Gastrocnemius medialis (tissue), 4 donors: ENCODE measurements at regions of chr6 and their contacts with region 1.

Region 1: DNA sequence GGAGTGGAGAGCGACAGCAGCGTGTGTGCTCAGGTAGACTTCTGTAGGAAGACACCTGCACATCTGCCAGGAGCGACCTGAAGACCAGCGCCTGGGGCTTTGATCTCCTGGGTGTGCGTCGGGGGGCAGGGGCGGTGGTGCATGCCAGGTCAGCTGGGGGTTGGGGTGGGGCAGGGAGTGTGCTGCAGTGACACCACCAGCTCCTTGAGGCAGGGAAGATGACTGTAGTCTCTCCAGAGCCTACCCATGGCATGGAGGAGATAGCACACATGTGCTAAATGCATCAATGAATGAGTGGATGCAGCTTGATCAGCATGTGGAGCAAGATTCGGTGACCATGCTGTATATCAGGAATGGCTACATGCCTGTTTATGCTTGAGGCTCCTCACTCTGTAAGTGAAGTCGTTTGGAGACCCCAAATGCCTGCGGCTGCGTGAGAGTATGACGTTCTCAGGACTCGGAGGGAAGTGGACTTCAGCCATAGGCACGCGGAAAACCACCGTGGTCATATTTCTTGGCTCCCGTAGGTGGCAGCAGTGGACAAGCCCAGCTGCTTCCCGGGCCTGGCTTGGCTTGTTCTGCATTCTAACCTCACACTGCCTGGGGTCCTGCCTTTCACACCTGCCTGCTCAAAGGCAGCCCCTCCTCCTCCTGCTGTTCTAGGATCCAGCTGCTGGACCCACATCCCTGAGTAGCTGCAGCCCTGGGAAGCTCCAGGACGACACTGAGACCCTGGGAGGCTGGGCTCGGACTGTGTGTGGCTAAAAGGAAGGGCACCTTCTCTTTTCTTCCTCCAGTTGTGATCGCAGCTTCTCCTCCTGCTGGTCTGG is 39.4 kb upstream of the KCNK16 start:
- DNase-seq: peak in 1 of 2 donors; percentile 44
- ATAC-seq: peak; percentile 65 to 89
- H3K4me3 ChIP-seq: no peak overlapping the region
- H3K27ac ChIP-seq: no peak overlapping the region
- H3K4me1 ChIP-seq: no peaks in the 10 kb centered on the region
- H3K27me3 ChIP-seq: no peaks in the 10 kb centered on the region
- CTCF ChIP-seq: peak; percentile 39 to 77 (median 67)
- POLR2A ChIP-seq: no peak

Region 2: GRCh38 chr6:39892490-39893129 is 530.7 kb after region 1 on chr6:
- in situ Hi-C with region 1: loop called (anchors 25 kb)
- intact Hi-C with region 1: no loop called
- DNase-seq: peak in 1 of 2 donors; percentile 47
- ATAC-seq: peak in 1 of 2 donors; percentile 61
- H3K4me3 ChIP-seq: no peak overlapping the region
- H3K27ac ChIP-seq: peak overlapping the region in 1 of 4 donors; percentile 3
- H3K4me1 ChIP-seq: peaks cover 10 to 11% of the 10 kb centered on the region in 2 donors
- H3K27me3 ChIP-seq: no peaks in the 10 kb centered on the region
- CTCF ChIP-seq: peak; percentile 39 to 68 (median 64)
- POLR2A ChIP-seq: no peak

Region 3: GRCh38 chr6:40308533-40309306 is 946.8 kb after region 1 on chr6:
- in situ Hi-C with region 1: loop called in 3 of 4 experiments (anchors 25 kb)
- intact Hi-C with region 1: loop called (anchors 10 kb)
- DNase-seq: peak in 1 of 2 donors; percentile 35
- ATAC-seq: peak in 1 of 2 donors; percentile 58
- H3K4me3 ChIP-seq: no peak overlapping the region
- H3K27ac ChIP-seq: no peak overlapping the region
- H3K4me1 ChIP-seq: peaks cover 0 to 7% of the 10 kb centered on the region in 2 donors
- H3K27me3 ChIP-seq: no peaks in the 10 kb centered on the region
- CTCF ChIP-seq: peak; percentile 83 to 86 (median 84)
- POLR2A ChIP-seq: no peak

Region 4: GRCh38 chr6:40845553-40845952 is 1483.7 kb after region 1 on chr6:
- in situ Hi-C with region 1: loop called in 1 of 4 experiments (anchors 25 kb)
- intact Hi-C with region 1: no loop called
- DNase-seq: no peak
- ATAC-seq: peak in 1 of 2 donors; percentile 37
- H3K4me3 ChIP-seq: no peak overlapping the region
- H3K27ac ChIP-seq: no peak overlapping the region
- H3K4me1 ChIP-seq: peaks cover 0 to 13% of the 10 kb centered on the region in 2 donors
- H3K27me3 ChIP-seq: no peaks in the 10 kb centered on the region
- CTCF ChIP-seq: peak in 3 of 5 experiments; percentile 15 to 36 (median 31)
- POLR2A ChIP-seq: no peak

Region 5: GRCh38 chr6:41027799-41028628 is 1666.1 kb after region 1 on chr6:
- in situ Hi-C with region 1: loop called in 1 of 4 experiments (anchors 10 kb)
- intact Hi-C with region 1: no loop called
- DNase-seq: peak; percentile 67 to 79
- ATAC-seq: peak; percentile 82 to 91
- H3K4me3 ChIP-seq: peak overlapping the region; percentile 60 to 79 (median 70)
- H3K27ac ChIP-seq: peak overlapping the region; percentile 81 to 85 (median 82)
- H3K4me1 ChIP-seq: peaks cover 15 to 16% of the 10 kb centered on the region in 2 donors
- H3K27me3 ChIP-seq: no peaks in the 10 kb centered on the region
- CTCF ChIP-seq: peak; percentile 99 to 100 (median 99)
- POLR2A ChIP-seq: no peak